ENCODE measurements at regions of chr6 and their contacts with region 1.

Region 1: DNA sequence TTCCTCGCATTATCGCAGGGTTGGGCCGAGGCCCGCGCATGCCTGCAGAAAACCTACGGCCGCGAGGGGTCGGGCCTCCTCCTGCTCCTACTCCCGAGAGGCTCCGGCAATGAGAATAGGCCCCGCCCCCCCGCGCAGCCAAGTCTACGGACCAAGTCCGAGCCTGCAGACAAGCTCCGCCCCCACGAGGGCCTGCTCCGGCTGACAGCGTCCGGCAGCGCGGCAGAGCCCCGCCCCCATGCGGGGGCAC is 3.1 kb upstream of the GPSM3 start:
- DNase-seq: peak; percentile 100
- H3K4me3 Mint-ChIP-seq: peak overlapping the region; percentile 96
- H3K27ac Mint-ChIP-seq: peak overlapping the region; percentile 98
- H3K4me1 Mint-ChIP-seq: peaks cover 23% of the 10 kb centered on the region
- H3K27me3 Mint-ChIP-seq: no peaks in the 10 kb centered on the region

Region 2: DNA sequence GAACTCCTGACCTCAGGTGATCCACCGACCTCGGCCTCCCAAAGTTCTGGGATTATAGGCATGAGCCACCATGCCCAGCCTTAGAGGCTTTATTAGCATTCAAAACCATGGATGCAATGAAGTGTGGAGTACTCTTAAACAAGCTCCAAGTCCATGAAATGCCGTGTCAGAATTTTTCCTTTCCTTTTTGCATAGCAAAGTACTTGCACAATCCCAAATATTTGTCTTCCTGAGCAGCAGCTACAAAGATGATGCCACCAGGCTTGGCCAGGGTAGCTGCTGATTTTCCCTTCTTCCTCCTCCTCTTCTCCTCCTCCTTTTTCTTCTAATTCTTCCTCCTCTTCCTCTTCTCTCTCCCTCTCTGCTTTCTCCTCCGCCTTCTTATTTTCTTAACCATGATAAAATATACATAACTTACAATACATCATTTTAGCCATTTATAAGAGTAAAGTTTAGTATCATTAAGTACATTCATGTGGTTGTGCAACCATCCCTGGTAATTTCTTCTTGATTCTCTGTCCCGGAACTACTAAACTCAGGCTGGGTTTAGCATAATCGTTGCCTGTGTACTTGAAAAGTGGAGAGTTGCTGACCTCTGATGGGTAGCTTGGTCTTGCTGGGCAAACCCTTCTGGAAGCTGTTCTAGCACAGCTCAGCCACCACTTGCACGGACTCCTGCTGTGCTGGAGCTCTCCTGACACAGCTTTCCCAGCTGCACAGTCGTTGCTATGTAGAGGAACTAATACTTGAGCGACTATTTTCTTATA is 1234.5 kb before region 1 on chr6:
- CTCF ChIA-PET with region 1: no interaction called
- POLR2A ChIA-PET with region 1: no interaction called
- intact Hi-C with region 1: no loop called
- DNase-seq: no peak
- H3K4me3 Mint-ChIP-seq: no peak overlapping the region
- H3K27ac Mint-ChIP-seq: no peak overlapping the region
- H3K4me1 Mint-ChIP-seq: peaks cover 8% of the 10 kb centered on the region
- H3K27me3 Mint-ChIP-seq: peaks cover 13% of the 10 kb centered on the region

Region 3: GRCh38 chr6:32148289-32149091 is 47.1 kb before region 1 on chr6:
- CTCF ChIA-PET with region 1: interaction called, 7 read pairs
- POLR2A ChIA-PET with region 1: interaction called, 3 read pairs
- intact Hi-C with region 1: loop called (anchors 2 kb)
- DNase-seq: peak; percentile 87
- H3K4me3 Mint-ChIP-seq: peak overlapping the region; percentile 76
- H3K27ac Mint-ChIP-seq: no peak overlapping the region
- H3K4me1 Mint-ChIP-seq: peaks cover 28% of the 10 kb centered on the region
- H3K27me3 Mint-ChIP-seq: peaks cover 30% of the 10 kb centered on the region

Measured in activated CD4-positive, alpha-beta memory T cell treated with anti-CD3 and anti-CD28 coated beads for 36 hours (primary cell).